ENCODE measurements at regions of chr3 and their contacts with region 1.

Region 1: DNA sequence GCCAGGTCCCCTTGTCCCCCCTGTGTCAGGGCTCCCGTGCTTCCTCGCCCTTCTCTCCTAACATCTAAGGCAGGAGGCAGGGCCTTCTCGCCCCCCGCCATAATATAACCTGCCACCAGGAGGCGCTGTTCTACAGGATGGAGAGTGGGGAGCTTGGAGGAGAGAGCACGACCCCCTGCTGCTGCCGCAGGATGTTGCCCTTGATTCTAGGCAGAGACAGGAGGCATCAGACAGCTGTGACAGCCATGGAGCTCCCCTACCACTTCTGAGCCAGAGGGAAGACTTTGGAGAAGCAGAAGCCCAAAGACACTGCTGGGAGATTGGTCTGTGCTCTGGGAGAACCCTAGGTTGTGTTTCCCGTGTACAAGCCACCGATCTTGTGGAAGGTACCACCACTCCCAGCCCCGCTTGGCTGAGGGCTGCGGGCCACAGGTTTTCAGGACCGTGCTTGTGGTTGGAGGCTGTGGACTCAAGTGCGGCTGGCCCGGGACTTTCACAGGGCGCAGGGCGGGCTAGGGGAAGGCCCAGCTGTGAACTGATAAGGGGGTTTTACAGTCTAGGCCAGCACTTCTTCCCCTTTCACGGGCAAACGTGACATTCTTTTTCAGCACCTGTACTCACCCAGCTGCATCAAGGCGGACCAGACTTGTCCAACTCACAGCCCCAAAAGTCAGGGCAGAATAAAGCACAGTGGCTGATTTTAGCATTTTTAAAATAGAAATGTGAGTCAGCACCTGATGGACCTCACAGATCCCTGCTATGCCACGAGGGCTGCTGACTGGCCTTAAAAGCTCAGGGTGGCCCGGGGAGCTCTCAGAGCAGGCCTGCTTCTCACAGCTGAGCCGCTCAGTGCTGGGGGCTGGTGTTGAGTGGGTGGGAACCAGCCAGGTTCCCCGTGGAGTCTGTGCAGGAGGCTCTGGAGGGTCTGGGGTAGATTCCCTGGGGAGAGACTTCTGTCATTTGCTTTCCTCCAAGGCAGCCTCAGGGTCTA is 2.6 kb upstream of the TIGIT start:
- DNase-seq: peak; percentile 83 to 97 (median 89)
- H3K4me3 ChIP-seq: peak overlapping the region; percentile 49
- H3K4me3 Mint-ChIP-seq: peak overlapping the region; percentile 82 to 97 (median 88)
- H3K27ac ChIP-seq: peak overlapping the region; percentile 81
- H3K27ac Mint-ChIP-seq: peak overlapping the region; percentile 91 to 99 (median 96)
- H3K4me1 ChIP-seq: peaks cover 35% of the 10 kb centered on the region
- H3K4me1 Mint-ChIP-seq: peaks cover 56 to 76% (median 71%) of the 10 kb centered on the region in 3 donors
- H3K27me3 ChIP-seq: no peaks in the 10 kb centered on the region
- H3K27me3 Mint-ChIP-seq: no peaks in the 10 kb centered on the region

Region 2: DNA sequence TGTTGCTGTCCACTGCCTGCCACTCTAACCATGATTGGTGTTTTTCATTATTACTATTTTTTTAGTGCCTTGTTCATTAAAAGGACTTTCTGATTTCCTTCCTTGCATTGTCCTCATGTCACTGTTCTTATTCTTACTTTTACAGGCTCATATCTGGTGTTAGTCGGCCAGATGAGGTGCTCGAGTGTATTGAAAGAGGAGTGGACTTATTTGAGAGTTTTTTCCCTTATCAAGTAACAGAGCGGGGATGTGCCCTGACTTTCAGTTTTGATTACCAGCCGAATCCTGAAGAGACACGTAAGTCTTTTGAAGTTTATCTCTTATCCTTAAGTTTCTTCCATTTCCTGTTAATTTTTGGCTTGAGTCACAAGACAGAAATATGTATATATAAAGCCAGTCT is 211.4 kb before region 1 on chr3:
- CTCF ChIA-PET with region 1: no interaction called
- POLR2A ChIA-PET with region 1: no interaction called
- DNase-seq: no peak
- H3K4me3 ChIP-seq: no peak overlapping the region
- H3K4me3 Mint-ChIP-seq: no peak overlapping the region
- H3K27ac ChIP-seq: no peak overlapping the region
- H3K27ac Mint-ChIP-seq: peak overlapping the region in 1 of 8 donors; percentile 51
- H3K4me1 ChIP-seq: no peaks in the 10 kb centered on the region
- H3K4me1 Mint-ChIP-seq: no peaks in the 10 kb centered on the region
- H3K27me3 ChIP-seq: no peaks in the 10 kb centered on the region
- H3K27me3 Mint-ChIP-seq: no peaks in the 10 kb centered on the region

Region 3: DNA sequence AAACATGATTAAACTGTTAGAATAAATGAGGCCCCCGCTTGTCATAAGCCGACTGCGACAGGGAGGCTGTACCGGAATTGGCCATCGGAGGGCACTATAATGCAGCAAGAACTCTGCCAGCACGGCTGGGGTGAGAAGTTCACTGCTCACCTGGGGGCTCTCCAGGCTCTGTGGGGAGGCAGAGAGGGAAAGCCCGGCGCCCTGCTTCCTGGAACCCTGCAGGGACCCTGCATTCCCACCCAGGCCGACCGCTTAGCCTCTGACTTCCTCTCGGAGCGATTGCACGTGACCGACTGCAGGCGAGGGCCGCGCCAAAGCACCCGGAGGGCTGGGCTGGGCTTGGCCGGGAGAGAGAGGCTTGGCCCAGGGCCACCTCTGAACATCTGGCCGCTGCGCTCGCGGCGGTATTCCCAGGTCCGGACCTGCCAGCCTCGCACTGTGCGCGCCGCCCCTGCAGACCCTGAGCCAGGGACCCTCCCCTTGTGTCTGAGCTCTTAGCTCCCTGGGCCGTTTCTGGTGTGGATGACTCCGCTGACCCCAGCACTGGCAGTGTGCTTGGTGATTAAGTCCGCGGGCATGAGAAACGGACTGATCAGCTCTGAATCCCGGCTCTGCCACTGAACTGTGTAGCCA is 138.6 kb before region 1 on chr3:
- CTCF ChIA-PET with region 1: interaction called, 93 read pairs
- POLR2A ChIA-PET with region 1: no interaction called
- DNase-seq: peak; percentile 74 to 89 (median 76)
- H3K4me3 ChIP-seq: peak overlapping the region; percentile 44
- H3K4me3 Mint-ChIP-seq: peak overlapping the region; percentile 56 to 89 (median 68)
- H3K27ac ChIP-seq: no peak overlapping the region
- H3K27ac Mint-ChIP-seq: peak overlapping the region in 6 of 8 donors; percentile 35 to 77 (median 46)
- H3K4me1 ChIP-seq: peaks cover 7% of the 10 kb centered on the region
- H3K4me1 Mint-ChIP-seq: peaks cover 10 to 19% (median 15%) of the 10 kb centered on the region in 3 donors
- H3K27me3 ChIP-seq: no peaks in the 10 kb centered on the region
- H3K27me3 Mint-ChIP-seq: no peaks in the 10 kb centered on the region

Region 4: DNA sequence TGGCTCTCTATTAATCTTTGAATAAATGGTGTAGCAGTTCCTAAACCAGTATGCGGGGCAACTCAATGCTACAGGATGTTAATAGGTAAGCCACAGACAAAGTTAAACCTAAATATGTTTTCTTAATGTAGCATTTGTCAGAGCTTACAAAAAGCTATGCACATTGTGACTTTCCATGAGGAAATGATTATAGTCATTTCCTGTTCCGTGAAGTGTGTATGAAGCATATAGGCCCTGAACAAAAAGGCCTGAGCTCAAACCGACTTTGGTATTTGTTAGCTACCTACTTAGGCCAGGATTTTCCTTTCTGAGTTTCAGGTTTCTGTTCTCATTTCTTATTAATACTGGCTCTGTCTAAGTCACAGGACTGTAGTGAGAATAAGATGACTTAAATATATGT is 68.1 kb before region 1 on chr3:
- CTCF ChIA-PET with region 1: interaction called, 57 read pairs
- POLR2A ChIA-PET with region 1: interaction called, 15 read pairs
- DNase-seq: peak in 3 of 5 donors; percentile 53 to 68 (median 62)
- H3K4me3 ChIP-seq: no peak overlapping the region
- H3K4me3 Mint-ChIP-seq: peak overlapping the region in 6 of 7 donors; percentile 6 to 59 (median 54)
- H3K27ac ChIP-seq: peak overlapping the region; percentile 10
- H3K27ac Mint-ChIP-seq: peak overlapping the region; percentile 85 to 99 (median 91)
- H3K4me1 ChIP-seq: peaks cover 93% of the 10 kb centered on the region
- H3K4me1 Mint-ChIP-seq: peaks cover 0 to 90% (median 0%) of the 10 kb centered on the region in 3 donors
- H3K27me3 ChIP-seq: no peaks in the 10 kb centered on the region
- H3K27me3 Mint-ChIP-seq: no peaks in the 10 kb centered on the region

Region 5: GRCh38 chr3:114308830-114309229 is 17.6 kb after region 1 on chr3:
- CTCF ChIA-PET with region 1: interaction called, 44 read pairs
- POLR2A ChIA-PET with region 1: interaction called, 53 read pairs
- DNase-seq: peak; percentile 36 to 85 (median 54)
- H3K4me3 ChIP-seq: peak overlapping the region; percentile 27
- H3K4me3 Mint-ChIP-seq: peak overlapping the region; percentile 57 to 84 (median 73)
- H3K27ac ChIP-seq: peak overlapping the region; percentile 64
- H3K27ac Mint-ChIP-seq: peak overlapping the region; percentile 86 to 99 (median 96)
- H3K4me1 ChIP-seq: peaks cover 67% of the 10 kb centered on the region
- H3K4me1 Mint-ChIP-seq: peaks cover 73 to 93% (median 91%) of the 10 kb centered on the region in 3 donors
- H3K27me3 ChIP-seq: no peaks in the 10 kb centered on the region
- H3K27me3 Mint-ChIP-seq: peaks cover 0 to 3% of the 10 kb centered on the region in 2 donors

Region 6: DNA sequence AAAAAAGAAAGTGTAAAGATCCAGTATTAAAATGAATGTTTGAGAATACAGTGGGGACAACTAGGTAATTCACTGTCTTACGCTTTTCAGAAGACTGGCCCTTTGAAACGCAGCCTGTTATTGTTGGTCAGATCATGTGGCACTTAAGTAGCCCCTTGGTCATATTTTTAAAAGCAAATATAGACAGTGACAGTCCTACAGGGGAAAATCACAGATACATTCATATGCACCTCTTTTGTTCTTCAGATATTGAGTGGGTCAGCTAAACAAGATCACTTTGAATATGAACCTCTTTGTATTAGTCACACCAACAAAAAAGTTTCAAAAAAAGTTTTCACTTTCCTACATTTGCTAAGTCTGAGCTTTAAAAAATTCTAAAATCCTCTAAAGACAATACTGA is 38.6 kb after region 1 on chr3:
- CTCF ChIA-PET with region 1: interaction called, 29 read pairs
- POLR2A ChIA-PET with region 1: interaction called, 4 read pairs
- DNase-seq: no peak
- H3K4me3 ChIP-seq: no peak overlapping the region
- H3K4me3 Mint-ChIP-seq: peak overlapping the region in 2 of 7 donors; percentile 17 to 24
- H3K27ac ChIP-seq: no peak overlapping the region
- H3K27ac Mint-ChIP-seq: peak overlapping the region in 4 of 8 donors; percentile 8 to 45 (median 23)
- H3K4me1 ChIP-seq: peaks cover 32% of the 10 kb centered on the region
- H3K4me1 Mint-ChIP-seq: peaks cover 78 to 96% (median 95%) of the 10 kb centered on the region in 3 donors
- H3K27me3 ChIP-seq: no peaks in the 10 kb centered on the region
- H3K27me3 Mint-ChIP-seq: no peaks in the 10 kb centered on the region

Region 7: GRCh38 chr3:114362815-114363214 is 71.6 kb after region 1 on chr3:
- CTCF ChIA-PET with region 1: interaction called, 11 read pairs
- POLR2A ChIA-PET with region 1: no interaction called
- DNase-seq: no peak
- H3K4me3 ChIP-seq: no peak overlapping the region
- H3K4me3 Mint-ChIP-seq: no peak overlapping the region
- H3K27ac ChIP-seq: no peak overlapping the region
- H3K27ac Mint-ChIP-seq: peak overlapping the region in 2 of 8 donors; percentile 14 to 57
- H3K4me1 ChIP-seq: no peaks in the 10 kb centered on the region
- H3K4me1 Mint-ChIP-seq: peaks cover 0 to 6% (median 0%) of the 10 kb centered on the region in 3 donors
- H3K27me3 ChIP-seq: no peaks in the 10 kb centered on the region
- H3K27me3 Mint-ChIP-seq: no peaks in the 10 kb centered on the region